ENCODE measurements at regions of chr1 and their contacts with region 1.

Region 1: GRCh38 chr1:67274623-67275325 is 32.9 kb upstream of the IL12RB2 start:
- DNase-seq: no peak
- ATAC-seq: no peak
- H3K4me3 ChIP-seq: no peak overlapping the region
- H3K27ac ChIP-seq: no peak overlapping the region
- H3K4me1 ChIP-seq: no peaks in the 10 kb centered on the region
- H3K27me3 ChIP-seq: no peaks in the 10 kb centered on the region
- CTCF ChIP-seq: no peak

Region 2: DNA sequence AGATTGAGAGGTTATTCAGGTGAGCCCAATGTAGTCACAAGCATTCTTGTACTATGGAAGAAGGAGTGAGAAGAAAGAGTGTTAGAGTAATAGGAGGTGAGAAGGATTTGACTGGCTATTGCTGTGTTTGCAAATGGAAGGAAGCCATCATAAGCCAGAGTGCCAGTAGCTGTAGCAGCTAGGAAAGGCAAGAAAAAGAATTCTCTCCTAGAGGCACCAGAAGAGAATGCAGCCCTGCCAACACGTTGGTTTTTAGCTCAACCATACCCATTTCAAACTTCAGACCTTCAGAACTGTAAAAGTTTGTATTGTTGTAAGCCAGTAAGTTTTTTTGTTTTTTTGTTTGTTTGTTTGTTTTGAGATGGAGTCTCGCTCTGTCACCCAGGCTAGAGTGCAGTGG is 24.0 kb after region 1 on chr1:
- CTCF ChIA-PET with region 1: no interaction called
- POLR2A ChIA-PET with region 1: interaction called, 13 read pairs
- intact Hi-C with region 1: no loop called
- DNase-seq: no peak
- ATAC-seq: no peak; the same call in 1 of the 2 replicates
- H3K4me3 ChIP-seq: no peak overlapping the region
- H3K27ac ChIP-seq: no peak overlapping the region
- H3K4me1 ChIP-seq: peaks cover 2% of the 10 kb centered on the region
- H3K27me3 ChIP-seq: no peaks in the 10 kb centered on the region
- CTCF ChIP-seq: no peak